ENCODE measurements at regions of chr7 and their contacts with region 1.

Region 1: DNA sequence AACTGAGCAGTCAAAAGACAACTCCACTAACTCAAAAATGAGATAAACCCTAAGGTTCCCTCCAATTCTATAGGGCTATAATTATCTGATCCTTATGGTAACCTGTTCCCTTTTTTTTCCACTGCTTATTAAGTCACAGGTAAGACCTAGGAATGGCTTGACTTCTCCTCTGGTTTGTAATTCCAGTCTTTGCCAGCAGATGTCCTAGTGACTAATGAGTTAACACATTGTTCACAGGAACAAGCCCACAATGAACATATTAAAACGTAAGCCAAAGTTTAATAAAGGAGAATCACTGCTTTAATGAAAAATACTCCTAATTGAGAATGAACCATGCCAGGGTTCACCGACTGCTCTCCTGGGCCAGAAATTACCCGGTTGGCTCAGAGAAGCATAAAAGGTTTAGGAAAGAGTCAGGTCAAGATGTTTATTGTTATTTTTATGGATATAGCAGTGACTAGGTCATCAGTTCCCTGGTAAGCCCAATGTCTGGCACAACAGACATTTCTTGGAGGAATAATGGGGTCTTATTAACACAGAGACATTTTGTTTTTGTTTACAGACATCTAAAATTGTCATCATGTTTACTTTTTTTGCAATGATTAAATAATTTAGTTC is 120.1 kb downstream of the ELAPOR2 start:
- DNase-seq: no peak
- ATAC-seq: peak; percentile 88
- H3K4me3 ChIP-seq: no peak overlapping the region
- H3K27ac ChIP-seq: no peak overlapping the region
- H3K4me1 ChIP-seq: peaks cover 4% of the 10 kb centered on the region
- H3K27me3 ChIP-seq: no peaks in the 10 kb centered on the region
- CTCF ChIP-seq: peak; percentile 72

Region 2: DNA sequence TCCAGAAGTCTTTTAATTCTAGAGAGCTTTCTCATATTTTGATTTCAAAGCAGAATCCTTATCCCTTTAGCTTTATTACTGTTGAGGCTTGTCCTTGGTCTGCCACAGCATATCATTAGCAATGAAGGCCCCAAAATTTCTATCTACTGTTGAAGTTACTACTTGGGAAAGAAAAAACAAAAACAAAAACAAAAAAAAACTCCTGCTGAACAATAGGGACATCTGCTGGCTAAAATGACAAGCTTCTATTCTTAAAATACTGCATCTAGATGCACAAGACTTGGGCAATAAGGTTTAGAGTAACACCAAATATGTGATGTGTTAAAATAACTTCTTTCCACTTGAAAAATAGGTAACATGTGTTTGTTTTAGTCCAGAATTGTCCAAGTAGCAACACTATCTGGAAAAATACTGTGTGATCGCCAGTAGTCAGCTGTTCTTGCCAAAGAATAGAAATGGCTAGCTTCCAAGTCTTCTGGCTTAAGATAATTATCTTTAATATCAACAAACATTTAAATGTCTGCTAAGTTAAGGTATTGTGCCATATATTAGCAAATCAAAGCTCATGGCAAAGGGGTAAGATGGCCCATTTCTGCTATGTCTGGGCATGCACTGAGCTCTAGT is 209.1 kb after region 1 on chr7:
- intact Hi-C with region 1: loop called (anchors 10 kb)
- DNase-seq: no peak
- ATAC-seq: no peak
- H3K4me3 ChIP-seq: no peak overlapping the region
- H3K27ac ChIP-seq: no peak overlapping the region
- H3K4me1 ChIP-seq: peaks cover 10% of the 10 kb centered on the region
- H3K27me3 ChIP-seq: no peaks in the 10 kb centered on the region
- CTCF ChIP-seq: peak; percentile 62